Activated CD4-positive, alpha-beta T cell treated with anti-CD3 and anti-CD28 coated beads for 36 hours (primary cell): ENCODE measurements at regions of chr19 and their contacts with region 1.

Region 1: DNA sequence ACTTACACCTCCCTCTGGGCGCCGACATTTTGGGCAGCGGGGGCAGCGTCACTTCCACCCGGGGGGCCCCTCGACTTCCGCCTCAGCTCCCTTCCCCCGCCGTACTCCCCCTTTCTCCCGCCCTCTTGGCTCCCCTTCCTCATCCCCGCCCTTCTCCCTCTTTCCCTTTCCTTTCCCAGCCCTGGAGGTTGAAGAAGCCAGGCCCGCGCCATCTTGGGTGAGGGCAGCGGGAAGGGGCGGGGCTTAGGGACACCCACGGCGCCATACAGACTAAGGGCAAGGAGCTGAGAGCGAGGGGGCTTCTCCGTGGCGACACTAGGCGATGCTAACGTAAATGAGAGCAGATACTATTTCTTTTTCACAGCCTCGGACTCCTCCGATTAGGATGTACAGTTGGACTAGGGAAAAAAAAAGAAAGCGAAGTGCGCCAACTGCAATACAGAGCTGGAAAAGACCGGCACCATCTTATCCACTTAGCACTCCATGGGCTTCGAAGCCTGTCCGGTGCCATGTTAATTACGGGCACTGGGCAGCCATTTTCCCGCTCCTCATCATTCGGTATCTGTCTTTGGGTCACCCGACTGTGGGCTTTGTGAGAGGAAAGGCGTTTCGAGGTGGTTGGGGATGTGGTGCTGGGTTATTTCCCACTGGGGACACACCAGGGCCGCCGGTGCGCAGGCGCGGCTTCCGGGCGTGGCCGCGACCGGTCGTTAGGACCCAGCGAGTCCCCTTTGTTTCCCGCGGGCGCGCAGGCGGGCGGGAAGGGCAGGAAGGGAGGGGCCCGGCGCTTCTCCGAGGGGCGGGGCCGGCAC is at the start of gene FIZ1:
- DNase-seq: peak; percentile 98
- ATAC-seq: peak; percentile 79
- H3K4me3 Mint-ChIP-seq: peak within 1 kb of the TSS; percentile 89
- H3K27ac Mint-ChIP-seq: peak within 1 kb of the TSS; percentile 99
- H3K4me1 Mint-ChIP-seq: peaks cover 31% of the 10 kb centered on the region
- H3K27me3 Mint-ChIP-seq: no peaks in the 10 kb centered on the region
- total RNA-seq, gene FIZ1: 13.6 to 14.7 TPM

Region 2: GRCh38 chr19:54463531-54464043 is 1136.1 kb before region 1 on chr19 and contains the start of gene LENG9:
- CTCF ChIA-PET with region 1: no interaction called
- POLR2A ChIA-PET with region 1: interaction called, 3 read pairs
- intact Hi-C with region 1: loop called in 1 of 2 experiments (anchors 1 kb)
- DNase-seq: peak; percentile 100
- ATAC-seq: peak; percentile 69
- H3K4me3 Mint-ChIP-seq: peak within 1 kb of the TSS; percentile 80
- H3K27ac Mint-ChIP-seq: peak within 1 kb of the TSS; percentile 91
- H3K4me1 Mint-ChIP-seq: peaks cover 26% of the 10 kb centered on the region
- H3K27me3 Mint-ChIP-seq: peaks cover 6% of the 10 kb centered on the region
- total RNA-seq, gene LENG9: 5.0 to 5.1 TPM

Region 3: DNA sequence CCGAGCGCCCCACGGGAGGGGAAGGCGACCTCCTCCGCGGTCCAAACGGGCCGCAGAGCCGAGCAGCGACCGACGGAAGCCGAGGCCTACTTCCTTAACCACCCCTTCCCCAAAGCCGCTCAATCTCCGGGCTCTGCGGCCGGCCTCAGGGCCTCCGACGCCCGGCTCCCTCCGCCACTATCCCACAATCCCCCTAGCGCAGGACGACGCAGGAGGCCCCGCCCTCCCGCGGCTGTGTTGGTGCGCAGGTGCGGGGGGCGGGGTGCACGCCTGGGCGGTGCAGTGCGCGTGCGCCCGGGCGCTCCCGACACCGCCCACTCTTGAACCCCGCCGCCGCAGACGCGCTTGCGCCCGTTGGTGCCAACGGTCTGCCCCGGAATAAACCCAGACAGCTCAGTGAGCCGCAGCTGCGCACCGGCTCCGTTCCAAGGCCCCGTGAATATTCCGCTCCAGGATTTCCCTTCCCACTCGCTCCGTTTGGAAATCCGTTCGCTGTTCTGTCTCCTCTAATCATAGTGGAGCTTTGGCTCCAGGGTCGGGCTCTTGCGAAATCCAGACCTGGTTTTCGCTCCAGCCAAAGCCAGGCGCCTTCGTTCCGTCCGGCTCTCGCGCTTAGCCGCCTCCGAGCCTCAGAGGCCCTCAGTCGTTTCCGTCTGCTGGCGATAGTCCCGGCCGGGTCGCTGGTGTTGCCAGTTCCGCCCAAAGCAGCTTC is 340.7 kb before region 1 on chr19 and contains the start of gene PPP6R1:
- CTCF ChIA-PET with region 1: no interaction called
- POLR2A ChIA-PET with region 1: interaction called, 3 read pairs
- intact Hi-C with region 1: loop called in 1 of 2 experiments (anchors 1 kb)
- DNase-seq: peak; percentile 98
- ATAC-seq: peak; percentile 69
- H3K4me3 Mint-ChIP-seq: peak within 1 kb of the TSS; percentile 95
- H3K27ac Mint-ChIP-seq: peak within 1 kb of the TSS; percentile 98
- H3K4me1 Mint-ChIP-seq: peaks cover 22% of the 10 kb centered on the region
- H3K27me3 Mint-ChIP-seq: no peaks in the 10 kb centered on the region
- total RNA-seq, gene PPP6R1: 177 to 201 TPM

Region 4: GRCh38 chr19:55461259-55461973 is 138.3 kb before region 1 on chr19 and contains the start of gene ISOC2:
- CTCF ChIA-PET with region 1: no interaction called
- POLR2A ChIA-PET with region 1: no interaction called
- intact Hi-C with region 1: loop called in 1 of 2 experiments (anchors 1 kb)
- DNase-seq: peak; percentile 100
- ATAC-seq: peak; percentile 98
- H3K4me3 Mint-ChIP-seq: peak within 1 kb of the TSS; percentile 80
- H3K27ac Mint-ChIP-seq: peak within 1 kb of the TSS; percentile 82
- H3K4me1 Mint-ChIP-seq: peaks cover 14% of the 10 kb centered on the region
- H3K27me3 Mint-ChIP-seq: no peaks in the 10 kb centered on the region
- total RNA-seq, gene ISOC2: 24.3 to 28.0 TPM

Region 5: GRCh38 chr19:55611983-55612645 is 12.4 kb after region 1 on chr19:
- CTCF ChIA-PET with region 1: no interaction called
- POLR2A ChIA-PET with region 1: no interaction called
- intact Hi-C with region 1: no loop called
- DNase-seq: no peak
- ATAC-seq: no peak
- H3K4me3 Mint-ChIP-seq: no peak overlapping the region
- H3K27ac Mint-ChIP-seq: peak overlapping the region; percentile 24
- H3K4me1 Mint-ChIP-seq: peaks cover 32% of the 10 kb centered on the region
- H3K27me3 Mint-ChIP-seq: no peaks in the 10 kb centered on the region

Region 6: GRCh38 chr19:55624109-55625003 is 24.7 kb after region 1 on chr19 and contains the start of gene ZNF784:
- CTCF ChIA-PET with region 1: interaction called, 3 read pairs
- POLR2A ChIA-PET with region 1: interaction called, 8 read pairs
- intact Hi-C with region 1: loop called (anchors 1 kb)
- DNase-seq: peak; percentile 97
- ATAC-seq: peak; percentile 70
- H3K4me3 Mint-ChIP-seq: peak within 1 kb of the TSS; percentile 79
- H3K27ac Mint-ChIP-seq: peak within 1 kb of the TSS; percentile 85
- H3K4me1 Mint-ChIP-seq: peaks cover 53% of the 10 kb centered on the region
- H3K27me3 Mint-ChIP-seq: no peaks in the 10 kb centered on the region
- total RNA-seq, gene ZNF784: 3.2 to 4.3 TPM

Region 7: GRCh38 chr19:56121180-56122167 is 521.8 kb after region 1 on chr19 and contains the start of gene ZNF787:
- CTCF ChIA-PET with region 1: no interaction called
- POLR2A ChIA-PET with region 1: interaction called, 7 read pairs
- intact Hi-C with region 1: loop called in 1 of 2 experiments (anchors 1 kb)
- DNase-seq: peak; percentile 98
- ATAC-seq: peak; percentile 92
- H3K4me3 Mint-ChIP-seq: peak within 1 kb of the TSS; percentile 82
- H3K27ac Mint-ChIP-seq: peak within 1 kb of the TSS; percentile 91
- H3K4me1 Mint-ChIP-seq: peaks cover 48% of the 10 kb centered on the region
- H3K27me3 Mint-ChIP-seq: no peaks in the 10 kb centered on the region
- total RNA-seq, gene ZNF787: 27.6 to 28.4 TPM